GM10248 (cell line): ENCODE measurements at regions of chr1 and their contacts with region 1.

Region 1: GRCh38 chr1:98761219-98761865 is 99.8 kb downstream of the SNX7 start:
- DNase-seq: no peak
- CTCF ChIP-seq: no peak

Region 2: DNA sequence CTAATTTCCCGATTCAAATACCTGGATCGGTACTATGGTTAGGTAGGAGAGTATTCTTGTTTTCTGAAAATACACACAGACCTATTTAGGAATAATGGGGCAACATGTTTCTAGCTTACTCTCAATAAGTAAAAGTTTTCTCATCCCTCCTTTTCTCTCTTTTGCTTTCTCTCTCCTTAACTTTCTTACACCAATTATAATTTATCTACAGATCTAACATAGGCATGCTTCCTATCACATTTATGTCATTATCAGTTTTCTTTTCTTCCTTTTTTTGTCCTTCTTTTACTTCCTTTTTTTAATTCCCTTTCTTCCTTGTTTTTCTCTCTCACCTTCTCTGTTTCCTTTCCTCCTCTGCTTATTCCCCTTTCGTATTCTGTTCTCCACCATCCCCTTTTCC is 79.5 kb before region 1 on chr1:
- CTCF ChIA-PET with region 1: no interaction called
- POLR2A ChIA-PET with region 1: no interaction called
- DNase-seq: no peak
- CTCF ChIP-seq: no peak

Region 3: GRCh38 chr1:98749152-98749756 is 12.1 kb before region 1 on chr1:
- CTCF ChIA-PET with region 1: interaction called, 25 read pairs
- POLR2A ChIA-PET with region 1: no interaction called
- DNase-seq: no peak
- CTCF ChIP-seq: peak; percentile 33

Region 4: DNA sequence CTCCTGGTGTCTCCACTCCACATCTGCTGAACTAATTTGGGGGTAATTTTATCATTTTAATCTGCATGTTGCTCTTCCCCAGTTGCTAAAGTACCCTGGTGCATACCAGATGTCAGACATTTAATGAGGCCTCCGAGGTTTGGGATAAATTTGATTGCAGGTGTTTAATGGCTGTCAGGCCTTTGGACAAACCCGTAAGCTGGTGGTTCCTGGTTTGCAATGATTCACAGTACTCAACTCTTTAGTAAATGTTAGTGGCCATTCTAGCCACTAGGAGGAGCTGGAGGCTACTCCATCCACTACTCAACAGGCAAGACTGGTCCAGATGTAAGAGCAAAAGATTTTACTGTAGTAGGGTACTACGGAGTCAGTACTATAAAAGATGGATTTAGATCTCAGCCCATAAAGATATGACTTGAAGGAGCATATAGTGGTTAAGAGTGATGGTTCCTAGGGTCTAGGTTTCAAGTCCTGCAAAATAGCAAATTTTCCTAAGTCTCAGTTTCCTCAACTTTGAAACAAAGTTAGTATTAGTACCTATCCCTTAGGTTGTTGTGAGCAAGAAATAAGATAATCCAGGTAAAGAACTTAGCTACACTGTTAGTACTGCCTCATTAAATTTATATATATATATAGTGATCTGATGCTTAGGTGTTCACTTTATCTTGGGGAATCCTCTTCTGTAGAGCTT is 33.0 kb after region 1 on chr1:
- CTCF ChIA-PET with region 1: interaction called, 15 read pairs
- POLR2A ChIA-PET with region 1: no interaction called
- DNase-seq: peak; percentile 33
- CTCF ChIP-seq: peak; percentile 64

Region 5: GRCh38 chr1:98849969-98850636 is 88.8 kb after region 1 on chr1:
- CTCF ChIA-PET with region 1: no interaction called
- POLR2A ChIA-PET with region 1: no interaction called
- DNase-seq: no peak
- CTCF ChIP-seq: no peak

Region 6: DNA sequence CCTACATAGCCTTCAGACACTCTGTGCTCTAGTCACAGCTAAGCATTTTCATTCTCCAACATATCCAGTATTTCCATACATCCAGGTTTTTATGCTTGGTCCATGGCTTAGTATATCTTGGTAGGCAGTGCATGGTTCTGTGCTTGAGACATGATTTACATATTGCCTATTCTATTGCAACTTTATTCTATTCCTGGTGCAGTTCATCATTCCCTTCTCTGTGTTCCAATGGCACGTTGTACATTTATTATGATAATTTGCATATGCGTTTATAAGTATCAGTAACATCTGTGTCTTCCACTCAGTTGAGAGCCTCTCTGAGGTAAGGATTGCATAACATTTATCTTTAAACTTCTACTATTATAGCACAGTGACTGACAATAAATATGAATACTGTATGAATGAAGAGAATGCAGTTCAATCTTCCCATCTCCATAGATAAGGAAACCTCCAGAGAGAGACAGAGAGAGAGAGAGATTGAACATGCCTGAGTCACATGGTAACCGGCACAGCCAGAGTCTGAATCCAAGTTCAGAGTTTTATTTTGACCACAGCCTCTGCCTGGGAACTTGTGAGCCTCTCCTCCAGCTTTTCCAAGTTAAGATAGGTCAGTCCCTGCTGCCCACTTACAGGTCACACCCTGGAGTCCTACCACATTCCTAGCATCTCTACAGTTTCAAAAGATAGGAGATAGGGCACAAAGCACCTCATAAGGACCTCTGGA is 201.9 kb after region 1 on chr1:
- CTCF ChIA-PET with region 1: no interaction called
- POLR2A ChIA-PET with region 1: no interaction called
- DNase-seq: no peak
- CTCF ChIP-seq: no peak